PC-9 (cell line): ENCODE measurements at regions of chr10 and their contacts with region 1.

Region 1: GRCh38 chr10:52644373-52645186 is 128.0 kb downstream of the MBL2 start:
- DNase-seq: peak in 1 of 2 experiments; percentile 35
- H3K4me3 ChIP-seq: no peak overlapping the region
- H3K27ac ChIP-seq: no peak overlapping the region
- H3K4me1 ChIP-seq: no peaks in the 10 kb centered on the region
- H3K27me3 ChIP-seq: no peaks in the 10 kb centered on the region
- CTCF ChIP-seq: peak; percentile 98

Region 2: DNA sequence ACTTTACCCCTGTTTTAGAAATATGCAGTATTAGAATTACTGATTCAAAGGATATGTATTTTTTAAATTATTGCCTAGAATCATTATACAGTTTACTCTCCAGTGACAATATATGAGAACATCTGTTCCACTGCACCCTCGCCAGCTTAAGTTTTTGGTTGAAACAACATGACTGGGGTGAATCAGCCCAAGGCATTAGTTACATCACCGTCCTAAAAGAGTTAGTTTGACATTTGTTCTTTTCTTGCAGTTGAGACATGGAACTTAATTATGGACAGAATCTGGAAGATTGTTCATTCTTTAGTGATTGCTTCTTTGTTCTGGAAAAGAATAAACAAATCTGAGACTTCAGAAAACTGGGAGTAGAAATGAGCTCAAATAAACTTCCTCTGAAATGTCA is 497.8 kb before region 1 on chr10:
- CTCF ChIA-PET with region 1: interaction called, 10 read pairs
- POLR2A ChIA-PET with region 1: no interaction called
- intact Hi-C with region 1: no loop called
- DNase-seq: no peak
- H3K4me3 ChIP-seq: no peak overlapping the region
- H3K27ac ChIP-seq: no peak overlapping the region
- H3K4me1 ChIP-seq: no peaks in the 10 kb centered on the region
- H3K27me3 ChIP-seq: no peaks in the 10 kb centered on the region
- CTCF ChIP-seq: no peak

Region 3: DNA sequence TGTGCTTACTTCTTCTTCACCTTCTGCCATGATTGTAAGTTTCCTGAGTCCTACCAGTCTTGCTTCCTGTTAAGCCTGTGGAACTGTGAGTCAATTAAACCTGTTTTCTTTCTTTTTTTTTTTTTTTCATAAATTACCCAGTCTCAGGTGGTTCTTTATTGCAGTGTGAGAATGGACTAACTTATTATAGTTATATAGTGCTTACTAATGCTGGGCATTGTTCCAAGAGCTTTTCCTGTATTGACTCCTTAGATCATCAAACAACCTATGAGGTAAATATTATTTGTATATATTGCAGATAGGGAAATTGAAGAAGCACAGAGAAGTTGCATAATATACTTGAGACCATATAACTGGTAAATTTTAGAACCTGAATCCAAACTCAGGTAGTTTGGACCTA is 29.9 kb after region 1 on chr10:
- CTCF ChIA-PET with region 1: interaction called, 10 read pairs
- POLR2A ChIA-PET with region 1: no interaction called
- intact Hi-C with region 1: no loop called
- DNase-seq: no peak
- H3K4me3 ChIP-seq: no peak overlapping the region
- H3K27ac ChIP-seq: no peak overlapping the region
- H3K4me1 ChIP-seq: peaks cover 8% of the 10 kb centered on the region
- H3K27me3 ChIP-seq: no peaks in the 10 kb centered on the region
- CTCF ChIP-seq: no peak

Region 4: DNA sequence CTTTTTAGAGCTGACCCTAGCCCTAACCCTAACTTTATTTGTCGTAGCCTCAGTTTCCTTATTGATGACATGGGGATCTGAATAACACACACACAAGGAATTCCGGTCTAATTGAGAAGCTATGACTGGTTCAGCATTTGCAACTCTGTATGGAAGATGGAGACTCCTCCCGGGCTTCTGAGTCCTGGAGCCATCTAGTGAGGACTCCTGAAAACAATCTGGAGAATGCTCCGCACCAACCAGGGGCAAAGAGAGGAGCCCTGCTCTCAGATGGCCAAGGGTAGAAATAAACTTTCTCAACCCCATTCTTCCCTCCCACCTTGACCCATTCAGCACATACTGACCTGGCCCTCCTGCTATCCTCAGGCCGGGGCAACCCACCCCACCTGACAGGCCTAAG is 101.6 kb after region 1 on chr10:
- CTCF ChIA-PET with region 1: no interaction called
- POLR2A ChIA-PET with region 1: interaction called, 12 read pairs
- intact Hi-C with region 1: no loop called
- DNase-seq: no peak
- H3K4me3 ChIP-seq: no peak overlapping the region
- H3K27ac ChIP-seq: no peak overlapping the region
- H3K4me1 ChIP-seq: no peaks in the 10 kb centered on the region
- H3K27me3 ChIP-seq: no peaks in the 10 kb centered on the region
- CTCF ChIP-seq: no peak